Activated CD8-positive, alpha-beta T cell treated with anti-CD3 and anti-CD28 coated beads for 36 hours (primary cell): ENCODE measurements at regions of chr9 and their contacts with region 1.

Region 1: DNA sequence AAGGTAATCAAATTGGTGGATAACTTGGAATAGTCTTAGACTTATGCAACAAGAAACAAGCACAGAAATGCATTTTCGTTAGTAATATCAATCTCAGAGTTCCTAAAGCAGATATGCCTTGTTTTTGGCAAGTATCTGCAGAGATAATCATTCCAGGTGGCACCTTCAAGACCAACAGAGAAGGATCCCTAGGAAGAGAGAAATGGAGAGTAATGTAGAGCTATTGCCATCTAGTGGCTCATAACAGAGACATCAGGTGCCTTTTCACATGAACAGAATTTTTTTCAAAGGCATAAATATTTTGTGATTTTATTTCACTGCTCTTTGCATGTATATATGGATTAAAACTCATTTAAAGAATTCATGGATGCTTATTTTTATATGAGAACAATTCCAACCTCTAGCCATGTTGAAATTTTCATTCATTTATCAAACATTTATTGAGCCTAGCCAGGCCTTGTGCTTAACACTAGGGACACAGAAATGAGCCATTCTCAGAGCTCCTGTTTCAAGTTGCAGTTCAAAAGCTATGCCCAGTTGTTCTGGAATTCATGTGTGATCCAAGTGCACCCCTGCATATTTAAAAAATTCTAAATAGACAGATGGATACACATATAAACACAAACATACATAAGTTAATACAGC is 117.5 kb upstream of the OR13F1 start:
- DNase-seq: no peak
- ATAC-seq: no peak
- H3K4me3 Mint-ChIP-seq: no peak overlapping the region
- H3K27ac Mint-ChIP-seq: no peak overlapping the region
- H3K4me1 Mint-ChIP-seq: no peaks in the 10 kb centered on the region
- H3K27me3 Mint-ChIP-seq: no peaks in the 10 kb centered on the region
- CTCF ChIP-seq: peak; percentile 47

Region 2: DNA sequence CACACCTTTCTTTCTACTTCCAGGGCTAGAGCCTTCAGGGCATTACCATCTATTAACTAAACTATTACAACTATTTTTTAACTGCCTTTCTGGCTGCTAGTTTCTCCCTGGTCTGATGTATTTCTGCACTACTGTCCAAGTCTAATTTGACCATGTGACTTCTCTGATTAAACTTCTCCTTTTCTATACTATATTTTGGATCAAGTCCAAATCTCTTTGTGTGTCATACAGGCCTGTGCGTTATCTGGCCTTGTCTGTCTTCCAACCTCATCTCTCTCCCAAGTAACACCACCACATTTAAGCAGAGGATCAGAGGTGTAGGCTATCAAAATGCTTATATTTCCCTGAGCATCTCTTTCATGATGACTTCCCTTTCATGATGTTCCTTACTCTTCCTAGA is 70.3 kb after region 1 on chr9:
- CTCF ChIA-PET with region 1: no interaction called
- POLR2A ChIA-PET with region 1: no interaction called
- intact Hi-C with region 1: no loop called
- DNase-seq: no peak
- ATAC-seq: no peak
- H3K4me3 Mint-ChIP-seq: no peak overlapping the region
- H3K27ac Mint-ChIP-seq: no peak overlapping the region
- H3K4me1 Mint-ChIP-seq: no peaks in the 10 kb centered on the region
- H3K27me3 Mint-ChIP-seq: no peaks in the 10 kb centered on the region
- CTCF ChIP-seq: no peak

Region 3: GRCh38 chr9:104608336-104608735 is 221.8 kb after region 1 on chr9:
- CTCF ChIA-PET with region 1: no interaction called
- POLR2A ChIA-PET with region 1: no interaction called
- intact Hi-C with region 1: no loop called
- DNase-seq: no peak
- ATAC-seq: no peak
- H3K4me3 Mint-ChIP-seq: no peak overlapping the region
- H3K27ac Mint-ChIP-seq: no peak overlapping the region
- H3K4me1 Mint-ChIP-seq: no peaks in the 10 kb centered on the region
- H3K27me3 Mint-ChIP-seq: no peaks in the 10 kb centered on the region
- CTCF ChIP-seq: no peak

Region 4: DNA sequence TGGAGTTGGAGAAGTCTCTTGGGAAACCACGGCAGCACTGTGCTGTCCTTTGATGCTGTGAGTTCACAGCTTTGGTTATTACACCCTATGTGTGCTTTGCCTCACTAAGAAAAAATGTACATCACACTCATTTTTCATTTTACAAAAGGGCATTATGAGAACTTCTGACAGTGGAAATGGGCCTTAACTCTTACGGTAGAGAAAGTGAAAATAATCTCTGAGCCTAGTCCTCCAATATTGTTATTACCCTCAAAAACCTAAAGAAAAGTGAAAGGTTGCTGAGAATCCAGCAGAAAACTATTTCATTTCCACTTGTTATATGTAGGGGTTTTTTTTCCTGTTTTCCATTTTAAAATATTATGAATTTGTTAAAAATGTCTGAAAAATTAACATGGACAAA is 299.5 kb after region 1 on chr9:
- CTCF ChIA-PET with region 1: no interaction called
- POLR2A ChIA-PET with region 1: no interaction called
- intact Hi-C with region 1: loop called (anchors 5 kb)
- DNase-seq: no peak
- ATAC-seq: no peak
- H3K4me3 Mint-ChIP-seq: no peak overlapping the region
- H3K27ac Mint-ChIP-seq: no peak overlapping the region
- H3K4me1 Mint-ChIP-seq: no peaks in the 10 kb centered on the region
- H3K27me3 Mint-ChIP-seq: no peaks in the 10 kb centered on the region
- CTCF ChIP-seq: no peak